H1 (cell line): ENCODE measurements at regions of chr11 and their contacts with region 1.

Region 1: DNA sequence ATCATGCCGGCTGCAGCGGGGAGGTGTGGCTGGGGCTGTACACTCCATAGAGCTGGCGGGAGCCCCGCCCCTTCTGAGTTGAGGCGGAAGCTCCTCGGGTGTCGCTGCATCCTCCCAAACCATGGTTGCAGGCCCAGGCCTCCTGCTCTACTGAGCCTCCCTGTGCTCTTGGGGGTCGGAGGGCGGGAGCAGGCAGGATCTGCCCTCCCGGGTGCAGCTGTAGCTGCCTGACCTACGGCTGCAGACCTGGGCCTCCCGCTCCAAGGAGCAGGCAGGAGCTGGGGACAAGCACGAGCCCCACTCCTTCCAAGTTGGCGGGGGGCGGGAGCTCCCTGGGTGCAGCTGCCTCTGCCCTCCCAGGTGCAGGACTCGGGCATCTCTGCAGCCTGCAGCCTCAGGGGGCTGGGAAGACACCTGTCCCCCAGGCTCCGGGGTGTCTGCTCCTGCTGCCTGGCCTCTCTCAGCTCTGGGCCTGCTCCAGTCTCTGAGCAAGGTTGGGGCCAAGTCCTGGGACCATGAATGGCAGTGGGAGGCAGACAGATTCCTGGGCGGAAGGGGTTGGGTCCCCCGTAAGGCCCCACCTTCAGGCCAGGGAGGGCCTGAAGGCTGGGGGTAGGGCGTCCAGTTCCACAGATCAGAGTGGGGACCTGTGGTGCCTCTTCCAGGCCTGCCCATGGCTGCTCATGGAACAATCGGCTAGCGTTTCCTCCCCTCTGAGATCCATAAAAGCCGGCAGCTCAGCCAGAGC is 46.4 kb upstream of the SC5D start:
- DNase-seq: no peak
- H3K4me3 ChIP-seq: no peak overlapping the region
- H3K27ac ChIP-seq: no peak overlapping the region
- H3K4me1 ChIP-seq: peaks cover 2 to 17% (median 11%) of the 10 kb centered on the region in 4 experiments
- H3K27me3 ChIP-seq: no peaks in the 10 kb centered on the region
- CTCF ChIP-seq: no peak
- EP300 ChIP-seq: no peak
- POLR2A ChIP-seq: no peak
- RAD21 ChIP-seq: no peak

Region 2: GRCh38 chr11:121063728-121064127 is 182.5 kb before region 1 on chr11:
- CTCF ChIA-PET with region 1: no interaction called
- POLR2A ChIA-PET with region 1: no interaction called
- DNase-seq: no peak
- H3K4me3 ChIP-seq: no peak overlapping the region
- H3K27ac ChIP-seq: no peak overlapping the region
- H3K4me1 ChIP-seq: no peaks in the 10 kb centered on the region
- H3K27me3 ChIP-seq: no peaks in the 10 kb centered on the region
- CTCF ChIP-seq: peak in 2 of 3 experiments; percentile 37 to 40; a peak in 2 of 4 replicates
- EP300 ChIP-seq: no peak
- POLR2A ChIP-seq: no peak
- RAD21 ChIP-seq: peak; percentile 47

Region 3: DNA sequence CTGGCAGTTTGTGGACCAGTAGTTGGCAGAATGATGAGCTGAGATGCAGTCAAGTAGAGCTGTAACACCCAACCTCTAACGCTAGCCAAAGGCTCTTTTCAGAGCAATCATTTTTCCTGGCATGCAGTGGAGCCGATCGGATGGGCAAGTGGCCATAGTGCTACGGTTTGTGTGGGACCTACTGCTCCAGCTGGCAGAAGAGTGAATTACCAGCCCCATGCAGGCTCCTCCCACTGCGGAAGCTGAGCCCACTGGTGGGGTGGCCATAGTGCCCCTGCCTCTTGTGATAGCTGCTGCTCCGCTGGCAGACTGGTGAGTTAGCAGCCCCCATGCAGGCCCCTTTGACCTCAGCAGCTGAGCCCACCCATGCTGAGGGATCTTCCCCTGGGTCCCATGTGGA is 19.4 kb after region 1 on chr11:
- CTCF ChIA-PET with region 1: interaction called, 10 read pairs
- POLR2A ChIA-PET with region 1: no interaction called
- DNase-seq: no peak
- H3K4me3 ChIP-seq: no peak overlapping the region
- H3K27ac ChIP-seq: no peak overlapping the region
- H3K4me1 ChIP-seq: peaks cover 0 to 7% (median 2%) of the 10 kb centered on the region in 4 experiments; a peak in 2 of 7 replicates
- H3K27me3 ChIP-seq: no peaks in the 10 kb centered on the region
- CTCF ChIP-seq: peak in 2 of 3 experiments; percentile 5 to 9; a peak in 1 of 4 replicates
- EP300 ChIP-seq: no peak
- POLR2A ChIP-seq: no peak
- RAD21 ChIP-seq: peak in 1 of 2 experiments; percentile 17; a peak in 1 of 4 replicates